ENCODE measurements at regions of chr2 and their contacts with region 1.

Region 1: GRCh38 chr2:39787950-39788349 is 8.9 kb upstream of the THUMPD2 start:
- DNase-seq: no peak
- ATAC-seq: no peak
- H3K4me3 Mint-ChIP-seq: no peak overlapping the region
- H3K27ac Mint-ChIP-seq: no peak overlapping the region
- H3K4me1 Mint-ChIP-seq: no peaks in the 10 kb centered on the region
- H3K27me3 Mint-ChIP-seq: peaks cover 2% of the 10 kb centered on the region
- CTCF ChIP-seq: no peak

Region 2: DNA sequence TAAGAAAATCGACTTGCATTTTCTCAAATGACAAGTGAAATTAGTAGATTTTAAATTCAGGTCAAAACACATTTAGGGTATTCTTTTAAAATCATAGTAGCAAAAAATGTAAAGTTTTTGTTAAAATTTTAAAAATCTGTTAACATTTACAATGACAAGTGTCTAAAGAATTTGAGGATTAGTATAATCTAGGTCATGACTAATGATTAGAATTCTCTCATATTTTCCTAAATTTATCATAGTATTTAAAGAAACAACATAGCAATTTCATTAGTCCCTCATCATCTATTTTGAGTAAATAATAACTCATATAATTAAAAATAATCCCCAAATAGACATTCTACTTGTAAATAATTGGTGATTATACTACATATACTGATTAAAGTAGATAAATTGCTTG is 32.5 kb before region 1 on chr2:
- CTCF ChIA-PET with region 1: no interaction called
- POLR2A ChIA-PET with region 1: no interaction called
- intact Hi-C with region 1: loop called (anchors 1 kb)
- DNase-seq: no peak
- ATAC-seq: no peak
- H3K4me3 Mint-ChIP-seq: no peak overlapping the region
- H3K27ac Mint-ChIP-seq: no peak overlapping the region
- H3K4me1 Mint-ChIP-seq: no peaks in the 10 kb centered on the region
- H3K27me3 Mint-ChIP-seq: no peaks in the 10 kb centered on the region
- CTCF ChIP-seq: no peak